GM10248 (cell line): ENCODE measurements at regions of chr2 and their contacts with region 1.

Region 1: GRCh38 chr2:30385327-30385726 is 61.7 kb upstream of the LCLAT1 start:
- DNase-seq: no peak
- CTCF ChIP-seq: no peak

Region 2: GRCh38 chr2:30373881-30374302 is 11.4 kb before region 1 on chr2:
- CTCF ChIA-PET with region 1: interaction called, 11 read pairs
- POLR2A ChIA-PET with region 1: no interaction called
- DNase-seq: no peak
- CTCF ChIP-seq: no peak